CD8-positive, alpha-beta memory T cell (primary cell): ENCODE measurements at regions of chr4 and their contacts with region 1.

Region 1: DNA sequence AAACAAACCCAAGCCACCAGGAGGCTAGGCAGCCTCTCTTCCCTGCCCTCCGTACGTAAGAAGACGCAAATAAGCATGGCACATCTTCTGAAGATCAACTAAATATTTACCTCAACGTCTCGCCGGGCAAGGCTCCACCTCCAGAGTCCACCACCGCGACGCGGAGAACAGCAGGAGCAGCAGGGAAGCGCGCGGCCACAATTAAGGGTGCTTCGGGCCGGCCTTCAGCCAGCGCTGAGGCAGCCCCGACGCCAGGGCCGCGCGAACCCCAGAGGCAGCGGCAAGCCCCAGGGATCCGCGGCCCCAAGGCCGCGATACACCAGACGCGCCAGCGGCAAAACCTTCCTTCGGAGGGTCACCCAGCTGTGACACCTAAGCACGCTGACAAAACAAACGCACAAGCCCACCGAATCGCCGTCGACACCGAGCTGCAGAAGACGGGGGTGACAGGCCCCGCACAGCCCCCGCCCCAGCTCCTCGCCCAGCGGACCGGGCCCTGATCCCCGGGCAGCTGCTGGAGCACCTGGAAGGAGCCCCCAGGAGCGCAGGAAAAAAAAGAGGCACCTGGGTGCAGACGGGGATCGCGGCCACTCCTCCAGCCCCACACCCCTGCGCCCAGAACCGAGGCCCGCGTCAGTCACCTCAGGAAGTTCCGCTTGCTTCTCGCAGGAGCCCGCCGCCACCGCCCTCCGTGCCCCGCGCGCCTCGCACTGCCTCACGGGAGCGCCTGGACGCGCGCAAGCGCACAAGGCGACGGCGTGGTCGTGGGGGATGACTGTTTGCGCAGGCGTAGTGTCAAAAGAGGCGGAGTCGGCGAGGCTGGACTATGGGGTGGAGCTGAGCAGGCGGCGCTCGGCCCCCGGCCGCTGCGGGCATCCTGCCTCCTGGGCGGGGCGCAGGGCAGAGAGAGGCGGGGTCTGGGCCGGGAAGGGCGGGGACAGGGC is at the starts of genes HAUS3 and POLN:
- DNase-seq: peak; percentile 99 to 100 (median 99)
- H3K4me3 ChIP-seq: peak within 1 kb of the TSS; percentile 81
- H3K4me3 Mint-ChIP-seq: peak within 1 kb of the TSS; percentile 88 to 95 (median 93)
- H3K27ac ChIP-seq: peak within 1 kb of the TSS; percentile 89
- H3K27ac Mint-ChIP-seq: peak within 1 kb of the TSS; percentile 90 to 98 (median 93)
- H3K4me1 ChIP-seq: peaks cover 39% of the 10 kb centered on the region
- H3K4me1 Mint-ChIP-seq: peaks cover 56 to 73% (median 66%) of the 10 kb centered on the region in 3 donors
- H3K27me3 ChIP-seq: no peaks in the 10 kb centered on the region
- H3K27me3 Mint-ChIP-seq: no peaks in the 10 kb centered on the region
- total RNA-seq, gene HAUS3: 23.8 to 23.9 TPM
- total RNA-seq, gene POLN: 1.5 to 1.6 TPM

Region 2: GRCh38 chr4:2290974-2291704 is 49.5 kb after region 1 on chr4:
- CTCF ChIA-PET with region 1: interaction called, 3 read pairs
- POLR2A ChIA-PET with region 1: interaction called, 10 read pairs
- DNase-seq: peak; percentile 80 to 94 (median 89)
- H3K4me3 ChIP-seq: peak overlapping the region; percentile 45
- H3K4me3 Mint-ChIP-seq: peak overlapping the region; percentile 66 to 86 (median 76)
- H3K27ac ChIP-seq: peak overlapping the region; percentile 65
- H3K27ac Mint-ChIP-seq: peak overlapping the region; percentile 93 to 98 (median 96)
- H3K4me1 ChIP-seq: peaks cover 56% of the 10 kb centered on the region
- H3K4me1 Mint-ChIP-seq: peaks cover 33 to 66% (median 41%) of the 10 kb centered on the region in 3 donors
- H3K27me3 ChIP-seq: no peaks in the 10 kb centered on the region
- H3K27me3 Mint-ChIP-seq: peaks cover 0 to 2% of the 10 kb centered on the region in 2 donors